ENCODE measurements at regions of chr17 and their contacts with region 1.

Region 1: GRCh38 chr17:50949989-50950881 is 84.1 kb upstream of the TOB1 start:
- DNase-seq: peak; percentile 79
- H3K4me3 ChIP-seq: no peak overlapping the region
- H3K27ac ChIP-seq: peak overlapping the region; percentile 76 to 85
- H3K4me1 ChIP-seq: peaks cover 32% of the 10 kb centered on the region
- H3K27me3 ChIP-seq: no peaks in the 10 kb centered on the region
- CTCF ChIP-seq: peak; percentile 65 to 71 (median 66)
- POLR2A ChIP-seq: no peak

Region 2: GRCh38 chr17:50758989-50759544 is 191.2 kb before region 1 on chr17:
- intact Hi-C with region 1: no loop called
- DNase-seq: no peak
- H3K4me3 ChIP-seq: no peak overlapping the region
- H3K27ac ChIP-seq: no peak overlapping the region
- H3K4me1 ChIP-seq: peaks cover 4% of the 10 kb centered on the region
- H3K27me3 ChIP-seq: no peaks in the 10 kb centered on the region
- CTCF ChIP-seq: no peak
- POLR2A ChIP-seq: no peak

Region 3: GRCh38 chr17:50865984-50866774 is 84.1 kb before region 1 on chr17 and contains the start of gene TOB1:
- intact Hi-C with region 1: loop called (anchors 5 kb)
- DNase-seq: peak; percentile 95
- H3K4me3 ChIP-seq: peak within 1 kb of the TSS; percentile 96 to 100
- H3K27ac ChIP-seq: peak within 1 kb of the TSS; percentile 99
- H3K4me1 ChIP-seq: peaks cover 7% of the 10 kb centered on the region
- H3K27me3 ChIP-seq: no peaks in the 10 kb centered on the region
- CTCF ChIP-seq: no peak
- POLR2A ChIP-seq: peak; percentile 94
- total RNA-seq, gene TOB1: 18.4 to 26.1 TPM